Mammary epithelial cell (primary cell): ENCODE measurements at regions of chr5 and their contacts with region 1.

Region 1: DNA sequence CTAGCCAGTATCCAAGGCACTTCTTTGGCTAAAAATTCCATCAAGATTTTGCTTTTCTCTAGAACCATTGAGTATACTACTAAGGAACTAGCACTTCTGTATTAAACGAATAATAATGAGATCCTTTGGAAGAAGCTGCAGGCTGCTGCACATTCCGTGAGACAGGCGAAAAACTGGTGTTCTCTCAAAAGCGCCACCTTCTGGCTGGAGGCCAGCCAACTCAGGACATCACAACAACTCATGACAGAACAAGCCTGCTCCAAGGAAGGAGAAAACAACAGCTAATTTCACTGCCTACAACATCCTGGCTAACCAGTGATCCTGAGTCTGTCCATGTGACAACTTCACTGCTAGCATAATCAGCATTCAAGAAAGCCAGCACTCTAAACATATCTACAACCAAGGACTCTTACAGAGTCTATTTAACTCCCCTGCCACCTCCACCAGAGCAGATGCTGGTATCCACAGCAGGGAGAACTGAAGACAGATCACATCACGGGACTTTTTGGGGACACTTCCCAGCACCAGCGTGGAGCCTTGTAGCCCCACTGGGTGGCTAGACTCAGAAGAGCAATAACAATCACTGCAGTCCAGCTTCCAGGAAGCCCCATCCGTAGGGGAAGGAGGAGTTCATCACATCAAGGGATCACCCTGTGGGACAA is 150.5 kb downstream of the YTHDC2 start:
- DNase-seq: peak; percentile 39
- H3K4me3 ChIP-seq: no peak overlapping the region
- H3K27ac ChIP-seq: no peak overlapping the region
- H3K4me1 ChIP-seq: no peaks in the 10 kb centered on the region
- H3K27me3 ChIP-seq: no peaks in the 10 kb centered on the region
- CTCF ChIP-seq: peak; percentile 24 to 53

Region 2: GRCh38 chr5:113612060-113612496 is 51.9 kb before region 1 on chr5:
- CTCF ChIA-PET with region 1: interaction called, 4 read pairs
- dilution Hi-C with region 1: no loop called
- in situ Hi-C with region 1: no loop called
- intact Hi-C with region 1: loop called (anchors 5 kb)
- DNase-seq: peak; percentile 30
- H3K4me3 ChIP-seq: no peak overlapping the region
- H3K27ac ChIP-seq: no peak overlapping the region
- H3K4me1 ChIP-seq: peaks cover 7% of the 10 kb centered on the region
- H3K27me3 ChIP-seq: no peaks in the 10 kb centered on the region
- CTCF ChIP-seq: peak; percentile 58 to 62